ENCODE measurements at regions of chr11 and their contacts with region 1.

Region 1: GRCh38 chr11:18115360-18116127 is 9.7 kb upstream of the SAAL1 start:
- DNase-seq: peak; percentile 62
- H3K4me3 ChIP-seq: no peak overlapping the region
- H3K27ac ChIP-seq: no peak overlapping the region
- H3K4me1 ChIP-seq: no peaks in the 10 kb centered on the region
- H3K27me3 ChIP-seq: peaks cover 10 to 30% of the 10 kb centered on the region in 2 experiments
- CTCF ChIP-seq: peak; percentile 80 to 81
- POLR2A ChIP-seq: no peak

Region 2: GRCh38 chr11:17736930-17737817 is 378.4 kb before region 1 on chr11:
- CTCF ChIA-PET with region 1: no interaction called
- POLR2A ChIA-PET with region 1: no interaction called
- dilution Hi-C with region 1: no loop called
- intact Hi-C with region 1: no loop called
- DNase-seq: no peak
- H3K4me3 ChIP-seq: no peak overlapping the region
- H3K27ac ChIP-seq: no peak overlapping the region
- H3K4me1 ChIP-seq: peaks cover 7% of the 10 kb centered on the region
- H3K27me3 ChIP-seq: peaks cover 52 to 53% of the 10 kb centered on the region in 2 experiments
- CTCF ChIP-seq: no peak
- POLR2A ChIP-seq: no peak

Region 3: GRCh38 chr11:18081551-18081950 is 34.0 kb before region 1 on chr11:
- CTCF ChIA-PET with region 1: interaction called, 11 read pairs
- POLR2A ChIA-PET with region 1: no interaction called
- dilution Hi-C with region 1: no loop called
- intact Hi-C with region 1: no loop called
- DNase-seq: peak; percentile 5
- H3K4me3 ChIP-seq: no peak overlapping the region
- H3K27ac ChIP-seq: no peak overlapping the region
- H3K4me1 ChIP-seq: peaks cover 18% of the 10 kb centered on the region
- H3K27me3 ChIP-seq: no peaks in the 10 kb centered on the region
- CTCF ChIP-seq: no peak
- POLR2A ChIP-seq: no peak

Region 4: DNA sequence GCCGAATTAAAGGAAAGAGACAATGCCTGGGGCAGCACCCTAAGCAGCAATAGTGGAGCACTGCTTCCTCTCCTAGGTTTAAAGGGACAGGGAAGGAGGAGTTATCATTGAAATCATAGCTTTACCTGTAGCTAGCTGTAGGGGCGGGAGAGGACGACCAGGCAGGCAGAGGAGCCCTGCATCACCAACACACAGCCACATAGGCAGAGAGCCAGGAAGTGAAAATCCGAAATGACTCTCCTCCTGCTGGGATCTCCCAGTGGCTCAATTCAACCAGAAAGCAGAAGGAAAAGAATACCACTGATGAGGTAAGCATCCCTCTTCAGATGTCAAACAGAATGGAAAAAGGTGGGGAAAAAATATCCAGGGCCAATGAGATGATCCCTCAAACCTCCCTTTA is 77.5 kb after region 1 on chr11:
- CTCF ChIA-PET with region 1: interaction called, 12 read pairs
- POLR2A ChIA-PET with region 1: no interaction called
- dilution Hi-C with region 1: no loop called
- intact Hi-C with region 1: no loop called
- DNase-seq: no peak
- H3K4me3 ChIP-seq: no peak overlapping the region
- H3K27ac ChIP-seq: no peak overlapping the region
- H3K4me1 ChIP-seq: no peaks in the 10 kb centered on the region
- H3K27me3 ChIP-seq: peaks cover 0 to 2% of the 10 kb centered on the region in 2 experiments
- CTCF ChIP-seq: no peak
- POLR2A ChIP-seq: no peak

Region 5: DNA sequence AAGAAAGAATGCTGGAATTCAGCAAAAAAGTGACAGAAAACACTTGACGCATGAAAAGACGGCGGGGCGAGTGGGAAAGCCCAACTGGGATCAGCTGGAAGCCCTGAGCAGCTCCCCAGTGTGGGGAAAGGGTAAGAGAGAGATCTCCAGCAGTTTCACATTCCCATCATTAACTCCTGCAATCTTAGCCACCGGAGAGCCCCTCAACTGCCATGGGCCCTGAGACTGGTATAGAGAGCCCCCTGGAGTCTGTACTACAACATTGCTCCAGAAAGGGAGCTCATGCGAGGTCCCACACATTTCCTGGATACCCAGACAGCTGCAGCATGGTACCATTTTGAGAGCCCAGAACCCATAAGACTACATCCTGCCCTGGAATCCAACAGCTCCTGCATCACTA is 88.2 kb after region 1 on chr11:
- CTCF ChIA-PET with region 1: interaction called, 111 read pairs
- POLR2A ChIA-PET with region 1: no interaction called
- dilution Hi-C with region 1: no loop called
- intact Hi-C with region 1: loop called (anchors 1 kb)
- DNase-seq: peak; percentile 5
- H3K4me3 ChIP-seq: no peak overlapping the region
- H3K27ac ChIP-seq: no peak overlapping the region
- H3K4me1 ChIP-seq: no peaks in the 10 kb centered on the region
- H3K27me3 ChIP-seq: peaks cover 2 to 3% of the 10 kb centered on the region in 2 experiments
- CTCF ChIP-seq: peak; percentile 45 to 62
- POLR2A ChIP-seq: no peak

Region 6: DNA sequence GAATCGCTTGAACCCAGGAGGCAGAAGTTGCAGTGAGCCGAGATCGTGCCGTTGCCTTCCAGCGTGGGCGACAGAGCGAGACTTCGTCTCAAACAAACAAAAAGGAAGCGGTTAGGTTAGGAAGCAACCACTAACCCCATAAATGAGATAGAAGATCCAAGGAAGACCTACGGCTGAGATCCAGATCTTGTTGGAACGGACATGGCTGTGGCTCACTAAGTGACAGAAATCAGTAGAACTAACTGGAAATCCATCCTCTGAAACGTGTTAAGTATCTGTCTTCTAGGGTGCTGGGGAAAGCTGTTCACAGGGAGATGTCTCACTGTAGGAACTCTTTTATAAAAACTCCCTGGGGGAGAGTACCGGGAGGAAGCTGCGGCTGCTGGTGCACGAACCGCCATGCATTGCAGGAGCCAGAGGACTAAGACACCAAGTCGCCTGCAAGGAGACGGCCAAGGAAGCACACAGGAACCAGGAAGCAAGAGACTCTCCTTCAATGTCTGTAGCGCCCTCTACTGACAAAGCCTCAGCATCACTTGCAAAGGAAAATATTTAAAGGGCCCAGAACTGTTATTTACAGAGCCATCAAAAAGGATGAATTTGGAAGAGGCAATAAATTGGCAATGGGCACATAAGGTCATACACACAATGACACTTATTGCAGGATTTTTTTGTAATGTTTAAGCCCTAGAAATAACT is 535.5 kb after region 1 on chr11:
- CTCF ChIA-PET with region 1: interaction called, 17 read pairs
- POLR2A ChIA-PET with region 1: no interaction called
- dilution Hi-C with region 1: no loop called
- intact Hi-C with region 1: loop called (anchors 1 kb)
- DNase-seq: peak; percentile 58
- H3K4me3 ChIP-seq: no peak overlapping the region
- H3K27ac ChIP-seq: no peak overlapping the region
- H3K4me1 ChIP-seq: no peaks in the 10 kb centered on the region
- H3K27me3 ChIP-seq: no peaks in the 10 kb centered on the region
- CTCF ChIP-seq: peak; percentile 68 to 69
- POLR2A ChIP-seq: no peak

Region 7: DNA sequence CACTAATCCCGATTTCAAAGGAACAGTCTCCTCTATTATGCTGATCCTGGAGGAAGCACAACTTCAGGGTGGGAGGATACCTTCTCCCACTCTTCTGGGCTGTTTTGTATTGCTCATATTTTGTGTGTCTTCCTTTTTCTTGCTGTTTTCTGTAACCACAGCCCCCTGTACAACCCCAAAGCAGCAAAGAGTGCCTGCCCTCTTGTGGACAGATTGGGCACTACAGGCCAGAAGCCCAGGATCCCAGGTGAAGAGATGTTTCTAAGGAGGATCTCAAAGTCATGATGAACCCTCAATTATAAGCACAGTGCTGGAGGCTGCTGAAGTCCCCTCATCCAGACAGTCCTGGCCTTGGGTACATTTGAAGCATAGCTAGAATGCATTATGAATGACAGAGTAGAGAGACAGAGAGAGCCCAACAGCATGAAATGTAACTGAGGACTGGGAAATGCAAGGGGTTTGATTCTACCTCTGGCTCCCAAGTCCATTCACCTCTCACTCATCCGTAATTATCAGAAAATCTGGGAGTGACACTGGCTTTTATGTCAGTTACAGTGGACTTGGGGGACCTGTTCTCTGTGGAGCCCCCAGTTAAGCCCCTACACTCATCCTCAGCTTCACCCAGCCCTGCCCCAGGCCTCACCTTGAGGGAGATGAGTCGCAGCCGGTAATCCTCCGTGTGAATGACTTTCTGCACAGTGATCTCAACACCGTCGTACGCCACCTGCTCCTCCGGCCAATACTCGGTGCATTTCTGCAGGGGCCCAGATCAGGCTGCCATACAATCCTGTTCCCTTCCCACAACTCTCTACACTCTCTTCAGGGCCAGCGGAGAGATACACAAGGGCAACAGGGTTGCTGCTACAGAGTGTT is 616.6 kb after region 1 on chr11:
- CTCF ChIA-PET with region 1: interaction called, 9 read pairs
- POLR2A ChIA-PET with region 1: no interaction called
- dilution Hi-C with region 1: no loop called
- intact Hi-C with region 1: loop called (anchors 1 kb)
- DNase-seq: peak; percentile 60
- H3K4me3 ChIP-seq: no peak overlapping the region
- H3K27ac ChIP-seq: no peak overlapping the region
- H3K4me1 ChIP-seq: no peaks in the 10 kb centered on the region
- H3K27me3 ChIP-seq: peaks cover 0 to 3% of the 10 kb centered on the region in 2 experiments
- CTCF ChIP-seq: peak; percentile 92 to 93
- POLR2A ChIP-seq: no peak

Region 8: DNA sequence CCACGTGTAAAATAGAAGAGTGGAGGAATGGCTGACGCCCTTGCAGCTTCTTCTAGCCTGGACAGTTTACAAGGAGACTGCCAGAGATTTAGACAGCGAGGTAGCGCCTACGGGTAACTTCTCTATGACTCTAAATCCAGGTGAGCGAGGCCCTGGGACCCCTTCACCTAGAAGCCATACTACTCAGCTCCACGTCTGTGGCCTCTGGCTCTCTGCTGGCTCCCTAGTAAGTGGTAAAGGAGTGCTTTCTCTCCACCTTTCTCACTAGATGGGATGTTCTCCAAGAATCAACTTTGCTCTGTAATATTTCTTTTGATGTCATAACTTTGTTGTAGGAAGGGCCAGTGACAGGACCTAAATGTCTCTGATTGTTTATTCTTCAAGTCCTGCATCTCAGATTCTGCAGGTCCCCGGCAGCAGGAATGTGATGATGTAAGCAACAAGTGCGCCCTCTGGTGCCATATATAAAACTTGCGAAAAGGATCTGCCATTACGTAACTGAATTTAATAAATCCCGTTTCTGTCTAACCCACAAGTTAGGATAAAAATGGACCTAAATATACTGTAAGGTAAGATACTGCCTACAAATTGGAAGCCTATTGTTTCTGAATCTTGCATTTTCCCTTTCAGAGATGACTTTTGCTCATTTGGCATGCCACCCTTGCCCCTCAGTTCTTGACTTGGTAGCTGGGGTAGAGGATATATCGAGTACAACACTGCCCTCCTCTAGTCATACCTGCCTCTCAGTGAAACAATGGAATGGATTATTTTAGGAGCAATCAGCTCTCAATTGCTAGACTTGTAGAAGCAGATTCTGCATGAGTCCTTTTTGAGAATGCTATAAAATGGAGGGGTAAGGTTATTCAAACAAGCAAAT is 687.1 kb after region 1 on chr11:
- CTCF ChIA-PET with region 1: interaction called, 41 read pairs
- POLR2A ChIA-PET with region 1: no interaction called
- dilution Hi-C with region 1: no loop called
- intact Hi-C with region 1: loop called (anchors 1 kb)
- DNase-seq: peak; percentile 69
- H3K4me3 ChIP-seq: no peak overlapping the region
- H3K27ac ChIP-seq: no peak overlapping the region
- H3K4me1 ChIP-seq: peaks cover 3% of the 10 kb centered on the region
- H3K27me3 ChIP-seq: peaks cover 8 to 13% of the 10 kb centered on the region in 2 experiments
- CTCF ChIP-seq: peak; percentile 53 to 57
- POLR2A ChIP-seq: no peak